Panc1 (cell line): ENCODE measurements at regions of chr16 and their contacts with region 1.

Region 1: DNA sequence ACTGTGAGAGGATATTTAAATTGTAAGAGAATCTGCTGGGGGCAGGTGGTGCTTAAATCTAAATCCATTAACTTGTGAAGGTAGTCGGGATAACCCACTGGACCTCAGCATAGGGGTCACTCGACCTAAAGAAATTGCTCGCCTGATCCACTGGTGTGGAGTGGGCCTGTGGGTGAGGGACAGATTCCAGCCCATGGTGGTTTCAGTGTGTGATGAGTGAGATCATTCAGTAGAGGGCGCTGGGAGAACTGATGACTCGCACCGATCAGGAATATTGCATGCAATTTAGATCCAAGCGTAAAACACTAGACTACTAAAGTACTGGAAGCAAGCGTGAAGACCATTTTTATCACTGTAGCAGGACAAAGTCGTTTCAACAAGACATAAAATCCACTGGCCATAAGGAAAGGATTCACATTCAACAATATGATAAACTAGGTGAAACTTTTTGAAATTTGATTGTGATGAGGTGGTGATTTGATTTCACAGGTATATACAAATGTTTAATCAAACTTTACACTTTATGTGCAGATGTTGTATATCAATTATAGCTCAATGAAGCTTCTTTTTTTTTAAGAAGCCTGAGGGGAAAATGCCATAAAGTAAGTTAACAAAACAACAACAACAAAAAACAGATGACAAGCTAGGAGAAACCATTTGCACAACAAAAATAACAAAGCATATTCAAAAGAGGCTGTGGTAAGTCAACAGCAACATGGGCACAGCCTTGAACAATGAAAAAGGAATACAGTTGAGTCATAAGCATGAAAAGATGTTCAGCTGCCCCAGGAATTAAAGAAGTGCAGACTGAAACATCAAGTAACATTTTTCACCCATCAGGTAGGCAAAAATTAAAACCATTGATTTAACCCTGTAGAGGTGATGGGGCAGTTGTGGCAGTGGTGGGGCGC is 7.5 kb upstream of the TMEM170A start:
- DNase-seq: peak; percentile 43
- ATAC-seq: peak; percentile 93
- H3K4me3 ChIP-seq: no peak overlapping the region
- H3K27ac ChIP-seq: no peak overlapping the region
- H3K4me1 ChIP-seq: no peaks in the 10 kb centered on the region
- H3K27me3 ChIP-seq: no peaks in the 10 kb centered on the region
- CTCF ChIP-seq: peak; percentile 81

Region 2: DNA sequence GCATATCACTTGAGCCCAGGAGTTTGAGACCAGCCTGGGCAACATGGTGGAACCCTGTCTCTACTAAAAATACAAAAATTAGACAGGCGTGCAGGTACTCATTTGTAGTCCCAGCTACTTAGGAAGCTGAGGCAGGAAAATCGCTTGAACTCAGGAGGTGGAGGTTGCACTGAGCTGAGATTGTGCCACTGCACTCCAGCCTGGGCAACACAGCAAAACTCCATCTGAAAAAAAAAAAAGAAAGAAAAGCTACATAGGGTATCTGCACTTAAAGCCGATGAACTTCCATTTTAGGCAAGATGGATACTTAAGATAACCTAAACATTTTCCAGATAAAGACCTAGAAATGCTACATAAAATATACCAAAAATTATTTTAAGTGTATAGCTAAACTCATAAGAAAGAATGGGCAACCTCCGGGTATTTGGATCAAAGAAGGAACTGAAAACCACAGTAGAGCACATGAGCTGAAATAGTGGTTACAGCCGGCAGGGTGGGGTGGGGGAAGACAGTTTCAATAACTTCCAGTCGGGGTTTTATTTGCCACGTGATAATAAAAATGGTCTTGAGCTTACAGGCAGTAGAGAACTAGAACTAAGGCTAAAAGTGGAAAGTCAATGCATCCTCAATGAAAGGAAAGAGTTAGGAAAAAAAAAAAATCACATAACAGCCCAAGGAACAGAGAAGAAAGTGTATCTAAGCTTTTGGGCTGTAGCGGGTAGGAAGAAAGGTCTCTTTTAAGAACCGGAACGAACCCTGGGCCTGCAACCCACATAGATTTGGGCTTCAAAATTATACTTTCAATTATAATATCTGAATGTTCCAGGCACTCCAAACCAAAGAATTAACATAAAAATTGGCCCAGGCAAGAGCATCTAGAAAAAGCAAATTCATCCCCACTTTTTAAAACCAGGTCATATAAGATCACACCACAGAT is 91.8 kb before region 1 on chr16:
- CTCF ChIA-PET with region 1: no interaction called
- POLR2A ChIA-PET with region 1: no interaction called
- in situ Hi-C with region 1: no loop called
- intact Hi-C with region 1: no loop called
- DNase-seq: no peak
- ATAC-seq: no peak
- H3K4me3 ChIP-seq: no peak overlapping the region
- H3K27ac ChIP-seq: no peak overlapping the region
- H3K4me1 ChIP-seq: no peaks in the 10 kb centered on the region
- H3K27me3 ChIP-seq: no peaks in the 10 kb centered on the region
- CTCF ChIP-seq: no peak

Region 3: DNA sequence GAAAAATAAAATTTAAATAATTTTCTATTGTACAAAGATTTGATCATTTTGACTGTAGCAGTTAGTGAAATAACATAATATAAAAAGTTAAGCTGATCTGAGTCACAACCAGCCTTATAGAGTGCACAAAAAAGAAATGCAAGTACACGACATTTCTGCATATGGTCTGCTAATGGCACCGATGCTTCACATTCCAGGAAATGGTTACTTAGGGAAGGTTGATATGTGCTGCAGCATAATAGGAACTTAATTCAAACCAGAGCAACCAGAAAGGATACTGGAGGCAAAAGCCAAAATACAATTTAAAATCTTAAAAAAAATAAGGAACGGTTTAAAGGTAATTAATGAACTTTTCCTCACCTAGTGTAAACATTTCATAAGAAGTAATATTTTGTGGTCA is 28.7 kb before region 1 on chr16:
- CTCF ChIA-PET with region 1: no interaction called
- POLR2A ChIA-PET with region 1: no interaction called
- in situ Hi-C with region 1: no loop called
- intact Hi-C with region 1: no loop called
- DNase-seq: no peak
- ATAC-seq: no peak
- H3K4me3 ChIP-seq: no peak overlapping the region
- H3K27ac ChIP-seq: no peak overlapping the region
- H3K4me1 ChIP-seq: no peaks in the 10 kb centered on the region
- H3K27me3 ChIP-seq: no peaks in the 10 kb centered on the region
- CTCF ChIP-seq: no peak

Region 4: GRCh38 chr16:75502916-75503605 is 31.1 kb after region 1 on chr16:
- CTCF ChIA-PET with region 1: interaction called, 11 read pairs
- POLR2A ChIA-PET with region 1: no interaction called
- in situ Hi-C with region 1: no loop called
- intact Hi-C with region 1: no loop called
- DNase-seq: no peak
- ATAC-seq: no peak
- H3K4me3 ChIP-seq: no peak overlapping the region
- H3K27ac ChIP-seq: no peak overlapping the region
- H3K4me1 ChIP-seq: no peaks in the 10 kb centered on the region
- H3K27me3 ChIP-seq: no peaks in the 10 kb centered on the region
- CTCF ChIP-seq: no peak

Region 5: DNA sequence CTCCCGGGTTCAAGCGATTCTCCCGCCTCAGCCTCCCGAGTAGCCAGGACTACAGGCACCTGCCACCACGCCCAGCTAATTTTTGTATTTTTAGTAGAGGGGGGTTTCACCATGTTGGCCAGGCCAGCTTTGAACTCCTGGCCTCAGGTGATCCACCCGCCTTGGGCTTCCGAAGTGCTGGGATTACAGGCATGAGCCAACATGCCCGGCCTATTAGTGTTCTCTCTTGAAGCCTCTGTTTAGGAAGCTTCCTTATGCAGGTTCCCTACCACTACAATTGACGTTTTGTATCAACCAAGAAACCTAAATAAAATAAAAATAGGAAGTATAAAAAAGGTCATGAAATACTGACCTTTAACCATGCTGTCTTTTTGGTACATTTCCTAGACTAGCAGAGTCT is 47.9 kb after region 1 on chr16:
- CTCF ChIA-PET with region 1: interaction called, 19 read pairs
- POLR2A ChIA-PET with region 1: interaction called, 7 read pairs
- in situ Hi-C with region 1: no loop called
- intact Hi-C with region 1: no loop called
- DNase-seq: no peak
- ATAC-seq: no peak
- H3K4me3 ChIP-seq: no peak overlapping the region
- H3K27ac ChIP-seq: no peak overlapping the region
- H3K4me1 ChIP-seq: no peaks in the 10 kb centered on the region
- H3K27me3 ChIP-seq: no peaks in the 10 kb centered on the region
- CTCF ChIP-seq: no peak

Region 6: DNA sequence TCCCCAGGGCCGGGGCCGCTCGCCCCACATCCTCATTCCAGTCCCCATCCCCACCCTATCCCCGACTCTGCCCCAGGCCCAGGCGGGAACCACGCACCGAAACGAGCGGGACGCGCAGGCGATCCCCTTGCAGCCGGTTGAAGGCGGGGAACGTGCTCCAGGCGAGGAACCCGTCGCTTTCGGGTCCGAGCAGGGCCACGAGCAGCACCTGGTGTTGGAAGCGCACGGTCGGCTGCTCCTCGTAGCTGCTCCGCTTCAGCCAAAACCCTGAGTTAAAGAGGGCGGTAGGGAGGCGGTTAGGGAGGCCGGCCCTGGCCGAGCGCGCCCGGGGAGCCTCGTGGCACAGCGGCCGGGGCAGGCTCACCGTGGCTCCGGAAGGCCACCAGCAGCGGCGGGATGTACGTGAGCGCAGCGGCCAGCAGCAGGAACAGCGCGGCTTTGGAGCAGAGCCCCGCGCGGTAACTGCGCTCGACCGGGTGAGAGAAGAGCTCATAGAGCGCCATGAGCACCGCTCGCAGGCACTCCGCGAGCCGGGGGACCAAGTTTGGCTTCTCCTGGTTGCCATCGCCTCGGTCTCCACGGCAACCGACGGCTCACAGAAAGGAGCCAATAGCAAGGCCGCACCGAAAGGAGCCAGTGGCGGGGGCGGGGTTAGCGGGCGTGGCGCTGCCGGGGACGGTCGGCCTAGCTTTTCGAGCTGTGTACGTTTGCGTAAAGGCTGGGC is 83.9 kb after region 1 on chr16 and contains the start of gene TMEM231:
- CTCF ChIA-PET with region 1: no interaction called
- POLR2A ChIA-PET with region 1: no interaction called
- in situ Hi-C with region 1: no loop called
- intact Hi-C with region 1: loop called (anchors 10 kb)
- DNase-seq: no peak
- ATAC-seq: peak; percentile 95
- H3K4me3 ChIP-seq: peak within 1 kb of the TSS; percentile 74 to 79
- H3K27ac ChIP-seq: peak within 1 kb of the TSS; percentile 82
- H3K4me1 ChIP-seq: no peaks in the 10 kb centered on the region
- H3K27me3 ChIP-seq: no peaks in the 10 kb centered on the region
- CTCF ChIP-seq: no peak
- total RNA-seq, gene TMEM231: 9.0 TPM

Region 7: DNA sequence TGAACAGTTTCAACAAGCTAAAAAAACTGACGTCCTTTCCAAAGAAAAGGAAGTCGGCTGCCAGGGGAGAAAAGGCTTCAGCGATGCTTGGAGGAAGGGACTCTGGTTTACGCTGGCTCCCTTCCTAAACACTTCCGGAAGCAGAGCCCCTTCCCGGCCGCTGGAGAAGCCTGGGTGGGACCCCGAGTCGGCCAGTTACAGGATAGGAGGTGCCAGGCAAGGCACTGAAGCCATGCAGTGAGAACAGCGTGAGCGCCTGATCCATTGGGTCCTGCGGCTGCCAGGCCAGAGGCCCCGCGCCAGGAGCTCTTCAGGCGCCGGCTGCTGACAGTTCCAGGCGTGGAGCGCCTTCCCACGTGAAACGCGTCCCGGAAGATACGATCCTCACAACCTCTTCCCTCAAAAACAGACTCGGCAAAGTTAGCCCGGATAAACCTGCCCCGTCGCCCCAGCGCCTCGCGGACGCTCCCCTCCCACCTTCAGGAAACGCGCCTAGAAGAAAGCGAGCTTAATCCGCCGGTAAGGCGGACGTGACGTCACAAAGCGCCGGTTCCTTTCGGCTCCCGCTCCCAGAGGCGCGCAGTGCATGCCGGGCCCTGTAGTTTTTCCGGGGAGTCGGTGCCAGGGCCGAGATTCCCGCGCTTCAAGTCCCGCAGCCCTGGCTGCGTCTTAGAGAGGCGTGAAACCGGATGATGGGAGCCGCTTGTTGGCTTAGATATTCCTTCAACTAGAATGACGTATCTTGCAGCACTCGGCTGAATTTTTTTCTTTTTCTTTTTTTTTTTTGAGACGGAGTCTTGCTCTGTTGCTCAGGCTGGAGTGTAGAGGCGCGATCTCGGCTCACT is 151.0 kb after region 1 on chr16 and contains the start of gene ADAT1:
- CTCF ChIA-PET with region 1: no interaction called
- POLR2A ChIA-PET with region 1: no interaction called
- in situ Hi-C with region 1: no loop called
- intact Hi-C with region 1: loop called (anchors 5 kb)
- DNase-seq: peak; percentile 81
- ATAC-seq: peak; percentile 98
- H3K4me3 ChIP-seq: peak within 1 kb of the TSS; percentile 82 to 89
- H3K27ac ChIP-seq: peak within 1 kb of the TSS; percentile 92
- H3K4me1 ChIP-seq: peaks cover 7% of the 10 kb centered on the region
- H3K27me3 ChIP-seq: no peaks in the 10 kb centered on the region
- CTCF ChIP-seq: no peak
- total RNA-seq, gene ADAT1: 46.8 TPM

Region 8: GRCh38 chr16:75764154-75764768 is 292.3 kb after region 1 on chr16:
- CTCF ChIA-PET with region 1: no interaction called
- POLR2A ChIA-PET with region 1: no interaction called
- in situ Hi-C with region 1: no loop called
- intact Hi-C with region 1: loop called (anchors 5 kb)
- DNase-seq: peak; percentile 39
- ATAC-seq: peak; percentile 93
- H3K4me3 ChIP-seq: no peak overlapping the region
- H3K27ac ChIP-seq: no peak overlapping the region
- H3K4me1 ChIP-seq: no peaks in the 10 kb centered on the region
- H3K27me3 ChIP-seq: peaks cover 6% of the 10 kb centered on the region; the same call in 1 of the 2 replicates
- CTCF ChIP-seq: peak; percentile 81